ENCODE measurements at regions of chr15 and their contacts with region 1.

Region 1: GRCh38 chr15:58457381-58457965 is 25.7 kb downstream of the LIPC start:
- DNase-seq: peak; percentile 65
- CTCF ChIP-seq: no peak

Region 2: GRCh38 chr15:58124585-58124984 is 332.9 kb before region 1 on chr15:
- CTCF ChIA-PET with region 1: no interaction called
- POLR2A ChIA-PET with region 1: no interaction called
- DNase-seq: no peak
- CTCF ChIP-seq: no peak

Region 3: GRCh38 chr15:58369261-58369701 is 88.2 kb before region 1 on chr15:
- CTCF ChIA-PET with region 1: no interaction called
- POLR2A ChIA-PET with region 1: no interaction called
- DNase-seq: no peak
- CTCF ChIP-seq: no peak

Region 4: DNA sequence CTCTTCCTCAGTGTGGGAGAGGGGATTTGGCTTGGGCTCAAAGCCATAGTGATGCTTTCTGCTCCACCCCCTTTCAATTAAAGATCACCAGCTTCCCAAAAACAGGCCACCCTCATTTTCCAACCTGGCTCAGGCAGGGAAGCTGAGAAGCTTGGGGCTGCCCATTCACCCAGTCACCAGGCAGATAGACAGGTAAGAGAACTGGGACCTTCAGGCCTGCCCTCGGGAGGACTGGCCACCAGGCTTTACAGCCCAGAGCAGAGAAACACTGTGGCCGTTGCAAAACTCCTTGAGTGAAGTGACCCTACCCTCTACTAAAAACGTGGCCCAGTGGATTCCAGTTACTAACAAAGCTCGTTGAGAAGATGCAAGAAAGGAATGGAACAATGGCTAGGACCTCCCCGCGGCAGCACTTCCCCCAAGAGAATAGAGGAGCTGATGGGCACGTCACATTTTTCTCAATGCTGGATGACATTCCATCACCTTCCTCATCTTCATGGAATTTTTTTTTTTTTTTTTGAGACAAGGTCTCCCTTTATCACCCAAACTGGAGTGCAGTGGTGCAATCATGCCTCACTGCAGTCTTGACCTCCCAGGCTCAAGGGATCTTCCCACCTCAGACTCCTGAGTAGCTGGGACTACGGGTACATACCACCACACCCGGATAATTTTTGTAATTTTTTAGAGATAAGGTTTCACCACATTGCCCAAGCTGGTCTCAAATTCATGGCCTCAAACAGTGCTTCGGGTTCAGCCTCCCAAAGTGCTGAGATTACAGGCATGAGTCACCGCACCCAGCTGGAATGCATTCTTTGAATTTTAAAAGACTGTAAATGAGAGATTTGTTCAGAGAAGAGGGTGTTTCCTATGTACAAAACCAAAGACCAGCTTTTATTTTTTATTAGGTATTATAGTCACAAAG is 12.2 kb after region 1 on chr15:
- CTCF ChIA-PET with region 1: interaction called, 11 read pairs
- POLR2A ChIA-PET with region 1: no interaction called
- DNase-seq: no peak
- CTCF ChIP-seq: no peak

Region 5: GRCh38 chr15:58515807-58516206 is 58.3 kb after region 1 on chr15:
- CTCF ChIA-PET with region 1: no interaction called
- POLR2A ChIA-PET with region 1: interaction called, 13 read pairs
- DNase-seq: peak; percentile 39
- CTCF ChIP-seq: no peak

Measured in GM10248 (cell line).